Heart left ventricle (tissue), 16 donors: ENCODE measurements at regions of chr22 and their contacts with region 1.

Region 1: GRCh38 chr22:26172389-26172990 is 3.2 kb downstream of the SEZ6L start:
- DNase-seq: peak in 1 of 5 donors; percentile 31
- ATAC-seq: no peak
- H3K4me3 ChIP-seq: no peak overlapping the region
- H3K27ac ChIP-seq: no peak overlapping the region
- H3K4me1 ChIP-seq: peaks cover 0 to 18% (median 6%) of the 10 kb centered on the region in 12 donors
- H3K27me3 ChIP-seq: peaks cover 3 to 79% (median 45%) of the 10 kb centered on the region in 9 donors
- CTCF ChIP-seq: peak; percentile 30 to 61 (median 50)
- POLR2A ChIP-seq: no peak

Region 2: GRCh38 chr22:25475257-25476022 is 697.0 kb before region 1 on chr22:
- intact Hi-C with region 1: no loop called
- DNase-seq: peak in 3 of 5 donors; percentile 35 to 47 (median 45)
- ATAC-seq: peak; percentile 40 to 73 (median 64)
- H3K4me3 ChIP-seq: no peak overlapping the region
- H3K27ac ChIP-seq: peak overlapping the region in 1 of 12 donors; percentile 17
- H3K4me1 ChIP-seq: peaks cover 0 to 15% (median 6%) of the 10 kb centered on the region in 12 donors
- H3K27me3 ChIP-seq: no peaks in the 10 kb centered on the region
- CTCF ChIP-seq: no peak
- POLR2A ChIP-seq: no peak

Region 3: DNA sequence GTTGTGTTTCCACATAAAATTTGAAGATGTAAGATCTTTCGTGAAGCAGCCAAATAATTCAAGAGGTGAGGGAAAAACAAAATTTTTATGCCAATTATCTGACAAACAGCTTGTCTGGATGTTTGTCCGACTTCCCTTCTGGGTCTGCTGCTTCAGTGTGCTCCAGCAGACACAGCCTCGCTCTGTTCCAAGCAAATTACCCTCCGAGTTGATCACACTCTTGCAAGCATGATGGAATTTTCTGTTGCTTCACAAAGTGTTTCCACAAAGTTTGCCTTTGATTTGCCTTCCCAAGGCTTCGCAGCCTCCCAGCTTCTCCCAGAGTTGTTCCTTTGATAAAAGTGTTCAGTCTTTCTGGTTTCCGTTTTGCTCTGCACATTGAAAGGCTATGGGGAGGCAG is 81.7 kb before region 1 on chr22:
- intact Hi-C with region 1: no loop called
- DNase-seq: no peak
- ATAC-seq: no peak
- H3K4me3 ChIP-seq: no peak overlapping the region
- H3K27ac ChIP-seq: no peak overlapping the region
- H3K4me1 ChIP-seq: no peaks in the 10 kb centered on the region
- H3K27me3 ChIP-seq: peaks cover 0 to 30% (median 0%) of the 10 kb centered on the region in 9 donors
- CTCF ChIP-seq: no peak
- POLR2A ChIP-seq: no peak

Region 4: GRCh38 chr22:26109686-26110315 is 62.7 kb before region 1 on chr22:
- intact Hi-C with region 1: loop called in 1 of 10 experiments (anchors 10 kb)
- DNase-seq: no peak
- ATAC-seq: no peak
- H3K4me3 ChIP-seq: no peak overlapping the region
- H3K27ac ChIP-seq: no peak overlapping the region
- H3K4me1 ChIP-seq: no peaks in the 10 kb centered on the region
- H3K27me3 ChIP-seq: peaks cover 0 to 23% (median 5%) of the 10 kb centered on the region in 9 donors
- CTCF ChIP-seq: no peak
- POLR2A ChIP-seq: no peak

Region 5: GRCh38 chr22:26143801-26144325 is 28.6 kb before region 1 on chr22:
- intact Hi-C with region 1: no loop called
- DNase-seq: no peak
- ATAC-seq: no peak
- H3K4me3 ChIP-seq: no peak overlapping the region
- H3K27ac ChIP-seq: no peak overlapping the region
- H3K4me1 ChIP-seq: no peaks in the 10 kb centered on the region
- H3K27me3 ChIP-seq: peaks cover 0 to 44% (median 3%) of the 10 kb centered on the region in 9 donors
- CTCF ChIP-seq: no peak
- POLR2A ChIP-seq: no peak

Region 6: GRCh38 chr22:26325641-26326040 is 153.2 kb after region 1 on chr22:
- intact Hi-C with region 1: loop called in 3 of 10 experiments (anchors 5 to 10 kb)
- DNase-seq: no peak
- ATAC-seq: no peak
- H3K4me3 ChIP-seq: no peak overlapping the region
- H3K27ac ChIP-seq: no peak overlapping the region
- H3K4me1 ChIP-seq: peaks cover 0 to 6% (median 0%) of the 10 kb centered on the region in 12 donors
- H3K27me3 ChIP-seq: peaks cover 0 to 5% (median 0%) of the 10 kb centered on the region in 9 donors
- CTCF ChIP-seq: no peak
- POLR2A ChIP-seq: no peak

Region 7: GRCh38 chr22:26330966-26331625 is 158.6 kb after region 1 on chr22:
- intact Hi-C with region 1: loop called in 3 of 10 experiments (anchors 5 to 10 kb)
- DNase-seq: peak in 3 of 5 donors; percentile 12 to 40 (median 36)
- ATAC-seq: peak in 3 of 4 donors; percentile 62 to 72 (median 68)
- H3K4me3 ChIP-seq: no peak overlapping the region
- H3K27ac ChIP-seq: no peak overlapping the region
- H3K4me1 ChIP-seq: no peaks in the 10 kb centered on the region
- H3K27me3 ChIP-seq: peaks cover 0 to 18% (median 4%) of the 10 kb centered on the region in 9 donors
- CTCF ChIP-seq: peak; percentile 54 to 82 (median 76)
- POLR2A ChIP-seq: no peak